Prostate gland (tissue), 2 donors: ENCODE measurements at regions of chr11 and their contacts with region 1.

Region 1: GRCh38 chr11:95337175-95337957 is 106.4 kb upstream of the SESN3 start:
- DNase-seq: peak; percentile 64
- H3K4me3 ChIP-seq: no peak overlapping the region
- H3K27ac ChIP-seq: peak overlapping the region; percentile 74 to 75
- H3K4me1 ChIP-seq: peaks cover 13% of the 10 kb centered on the region
- H3K27me3 ChIP-seq: no peaks in the 10 kb centered on the region
- CTCF ChIP-seq: no peak
- POLR2A ChIP-seq: no peak

Region 2: DNA sequence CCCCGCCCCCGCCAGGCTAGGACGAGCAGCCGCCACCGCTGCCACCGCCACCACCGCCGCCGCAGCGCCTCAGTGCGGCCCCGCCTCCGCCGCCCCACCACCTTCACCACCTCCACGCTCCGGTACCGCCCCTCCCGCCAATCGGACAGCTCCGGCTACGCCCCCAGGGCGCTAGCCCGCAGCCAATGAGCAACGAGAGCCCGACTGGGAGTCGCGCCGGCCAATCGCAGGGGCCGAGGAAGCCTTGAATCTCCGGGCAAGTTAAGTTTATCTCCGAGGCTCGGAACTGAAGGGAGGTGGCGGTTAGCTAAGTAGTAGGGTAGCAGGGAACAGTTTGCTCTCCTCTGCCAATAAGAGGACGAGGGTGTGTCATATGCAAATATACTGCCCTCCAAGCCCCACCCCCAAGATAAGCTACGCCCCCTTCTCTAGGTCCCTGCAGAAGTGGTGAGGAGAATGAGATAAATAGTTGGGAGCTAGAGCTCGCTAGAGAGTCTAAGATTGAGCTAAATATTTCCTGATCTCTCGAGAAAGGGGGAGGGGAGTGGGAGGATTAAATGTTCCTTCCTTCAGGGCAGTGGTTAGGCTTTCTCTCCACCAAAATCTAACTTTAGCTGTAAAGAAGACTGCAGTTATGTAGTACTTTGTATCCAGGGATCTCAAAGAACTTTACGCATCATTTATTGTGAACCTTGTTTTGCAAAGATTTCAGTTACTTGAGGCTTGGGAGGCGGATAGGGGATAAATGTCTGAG is 106.1 kb before region 1 on chr11 and contains the start of gene SESN3:
- intact Hi-C with region 1: loop called (anchors 5 kb)
- DNase-seq: peak; percentile 99
- H3K4me3 ChIP-seq: peak within 1 kb of the TSS; percentile 82 to 90
- H3K27ac ChIP-seq: peak within 1 kb of the TSS; percentile 84 to 88
- H3K4me1 ChIP-seq: no peaks in the 10 kb centered on the region
- H3K27me3 ChIP-seq: no peaks in the 10 kb centered on the region
- CTCF ChIP-seq: peak in 2 of 4 experiments; percentile 34 to 41
- POLR2A ChIP-seq: peak; percentile 81
- total RNA-seq, gene SESN3: 21.3 to 33.8 TPM

Region 3: DNA sequence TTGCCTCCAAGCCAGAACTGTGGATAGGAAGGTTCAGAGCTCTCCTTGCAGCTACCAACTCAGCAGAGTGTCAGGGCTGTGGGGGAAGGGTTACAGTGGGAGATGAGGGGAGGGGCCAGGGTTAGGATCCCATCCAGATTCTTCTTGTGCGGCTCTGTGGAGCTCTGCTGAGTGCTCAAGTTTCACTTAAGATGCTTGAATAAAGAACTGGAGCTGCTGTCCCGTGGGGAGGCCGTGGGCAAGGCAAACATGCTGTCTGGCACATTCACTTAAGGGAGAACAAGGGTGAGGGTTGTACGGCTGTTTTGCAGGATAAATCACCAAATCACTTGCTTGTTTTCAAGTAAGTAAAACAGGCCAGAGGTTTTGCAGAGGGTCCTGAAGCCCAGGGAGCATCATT is 255.1 kb after region 1 on chr11:
- intact Hi-C with region 1: loop called (anchors 5 kb)
- DNase-seq: no peak
- H3K4me3 ChIP-seq: no peak overlapping the region
- H3K27ac ChIP-seq: no peak overlapping the region
- H3K4me1 ChIP-seq: no peaks in the 10 kb centered on the region
- H3K27me3 ChIP-seq: no peaks in the 10 kb centered on the region
- CTCF ChIP-seq: no peak
- POLR2A ChIP-seq: no peak